ENCODE measurements at regions of chr3 and their contacts with region 1.

Region 1: GRCh38 chr3:127697551-127698240 is 24.9 kb downstream of the ABTB1 start:
- DNase-seq: peak; percentile 41 to 61 (median 51)
- H3K4me3 ChIP-seq: peak overlapping the region in 1 of 3 experiments; percentile 20
- H3K4me3 Mint-ChIP-seq: peak overlapping the region in 1 of 2 donors; percentile 51
- H3K27ac ChIP-seq: peak overlapping the region in 1 of 2 donors; percentile 31
- H3K27ac Mint-ChIP-seq: peak overlapping the region in 6 of 7 donors; percentile 38 to 86 (median 67)
- H3K4me1 ChIP-seq: peaks cover 16 to 18% of the 10 kb centered on the region in 2 donors
- H3K4me1 Mint-ChIP-seq: peaks cover 14% of the 10 kb centered on the region
- H3K27me3 ChIP-seq: no peaks in the 10 kb centered on the region
- H3K27me3 Mint-ChIP-seq: peaks cover 0 to 1% (median 1%) of the 10 kb centered on the region in 3 donors
- CTCF ChIP-seq: no peak

Region 2: GRCh38 chr3:127735767-127736704 is 38.3 kb after region 1 on chr3:
- intact Hi-C with region 1: loop called (anchors 5 kb)
- DNase-seq: peak; percentile 77 to 89 (median 85)
- H3K4me3 ChIP-seq: peak overlapping the region in 1 of 3 experiments; percentile 28
- H3K4me3 Mint-ChIP-seq: peak overlapping the region; percentile 12 to 85
- H3K27ac ChIP-seq: peak overlapping the region; percentile 69 to 77
- H3K27ac Mint-ChIP-seq: peak overlapping the region; percentile 88 to 96 (median 92)
- H3K4me1 ChIP-seq: peaks cover 63 to 66% of the 10 kb centered on the region in 2 donors
- H3K4me1 Mint-ChIP-seq: peaks cover 66% of the 10 kb centered on the region
- H3K27me3 ChIP-seq: no peaks in the 10 kb centered on the region
- H3K27me3 Mint-ChIP-seq: peaks cover under 1 to 3% (median 2%) of the 10 kb centered on the region in 3 donors
- CTCF ChIP-seq: no peak

Region 3: DNA sequence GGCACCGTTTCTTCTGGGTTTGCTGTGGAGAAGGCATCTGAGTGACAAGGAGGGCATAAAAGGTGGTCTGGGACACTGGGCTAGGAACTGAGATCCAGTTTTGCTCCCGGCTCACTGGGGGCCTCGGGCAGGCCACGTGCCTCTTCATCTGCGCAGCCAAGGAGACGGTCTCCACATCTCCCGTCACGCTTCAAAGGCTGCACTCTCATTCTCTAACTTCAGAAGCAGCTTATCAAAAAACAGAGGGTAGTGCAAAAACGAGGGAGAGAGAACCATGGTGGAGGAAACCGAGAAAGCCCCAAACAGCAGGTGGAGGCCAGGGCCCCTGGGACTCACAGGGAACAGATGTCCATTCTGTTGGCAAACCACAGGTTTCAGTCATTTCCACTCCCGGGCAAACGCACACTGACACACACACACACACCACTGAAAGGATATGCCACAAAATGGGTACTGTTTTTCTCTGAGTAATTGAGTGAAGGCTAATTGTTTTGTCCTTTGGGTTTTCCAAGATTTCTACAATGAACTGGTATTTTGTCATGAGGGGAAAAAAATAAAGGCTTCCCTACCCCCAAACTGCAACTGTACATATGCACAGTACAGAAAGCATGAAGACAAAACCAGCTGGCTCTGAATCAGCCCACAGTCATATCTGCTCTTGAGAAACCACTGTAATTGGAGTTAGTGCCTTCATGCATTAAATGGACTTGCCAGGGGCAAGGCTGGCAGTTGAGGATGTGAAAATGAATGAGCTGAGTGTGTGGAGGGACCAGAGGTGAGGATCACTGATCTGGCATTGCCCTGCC is 52.7 kb after region 1 on chr3:
- intact Hi-C with region 1: loop called in 1 of 2 experiments (anchors 5 kb)
- DNase-seq: peak in 2 of 3 donors; percentile 50 to 96
- H3K4me3 ChIP-seq: no peak overlapping the region
- H3K4me3 Mint-ChIP-seq: peak overlapping the region in 1 of 2 donors; percentile 18
- H3K27ac ChIP-seq: peak overlapping the region in 1 of 2 donors; percentile 24
- H3K27ac Mint-ChIP-seq: peak overlapping the region; percentile 6 to 88 (median 51)
- H3K4me1 ChIP-seq: peaks cover 36 to 40% of the 10 kb centered on the region in 2 donors
- H3K4me1 Mint-ChIP-seq: peaks cover 49% of the 10 kb centered on the region
- H3K27me3 ChIP-seq: no peaks in the 10 kb centered on the region
- H3K27me3 Mint-ChIP-seq: peaks cover 3 to 10% (median 3%) of the 10 kb centered on the region in 3 donors
- CTCF ChIP-seq: no peak

Region 4: GRCh38 chr3:128546646-128547045 is 849.0 kb after region 1 on chr3:
- intact Hi-C with region 1: no loop called
- DNase-seq: no peak
- H3K4me3 ChIP-seq: no peak overlapping the region
- H3K4me3 Mint-ChIP-seq: no peak overlapping the region
- H3K27ac ChIP-seq: no peak overlapping the region
- H3K27ac Mint-ChIP-seq: peak overlapping the region in 1 of 7 donors; percentile 18
- H3K4me1 ChIP-seq: no peaks in the 10 kb centered on the region
- H3K4me1 Mint-ChIP-seq: peaks cover 14% of the 10 kb centered on the region
- H3K27me3 ChIP-seq: no peaks in the 10 kb centered on the region
- H3K27me3 Mint-ChIP-seq: peaks cover 1 to 14% (median 9%) of the 10 kb centered on the region in 3 donors
- CTCF ChIP-seq: no peak

Measured in CD14-positive monocyte (primary cell).